ENCODE measurements at regions of chr16 and their contacts with region 1.

Region 1: DNA sequence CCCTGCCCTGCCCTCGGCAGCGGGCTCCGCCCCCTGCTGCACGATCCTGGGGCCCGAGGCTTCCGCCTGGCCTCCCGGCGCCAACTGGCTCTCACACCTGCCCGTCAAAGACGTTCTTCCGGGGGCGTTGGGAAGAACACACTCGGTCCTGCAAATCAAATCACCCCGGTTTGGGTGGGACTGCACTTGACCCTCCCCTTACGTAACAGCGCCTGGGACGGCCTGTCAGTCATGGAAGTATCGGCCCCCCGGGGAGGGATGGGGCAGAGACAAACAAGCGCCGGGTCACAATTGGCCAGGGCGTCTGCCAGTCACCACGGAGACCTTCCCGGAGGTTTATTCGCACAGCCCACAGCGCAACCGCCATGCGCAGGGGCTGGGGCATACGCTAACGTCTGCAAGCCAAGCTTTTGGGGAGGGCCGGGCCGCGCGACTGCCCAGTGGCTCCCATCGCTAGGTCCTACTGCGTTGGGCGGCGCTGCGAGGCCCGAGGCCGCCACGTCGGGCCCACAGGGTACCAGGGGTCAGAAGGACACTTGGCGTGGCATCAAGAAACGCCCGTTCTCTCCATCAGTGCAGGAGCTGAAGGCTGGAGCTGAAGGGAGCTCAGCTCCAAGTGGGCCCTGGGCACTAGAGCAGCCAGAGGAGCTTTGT is 388 bp upstream of the AKTIP start:
- DNase-seq: peak; percentile 100
- H3K4me3 ChIP-seq: peak overlapping the region; percentile 87 to 98 (median 94)
- H3K27ac ChIP-seq: peak overlapping the region; percentile 92 to 97 (median 96)
- H3K4me1 ChIP-seq: peaks cover 25 to 42% (median 35%) of the 10 kb centered on the region in 4 donors
- H3K27me3 ChIP-seq: no peaks in the 10 kb centered on the region
- CTCF ChIP-seq: peak in 1 of 3 experiments; percentile 8
- EP300 ChIP-seq: no peak
- POLR2A ChIP-seq: peak; percentile 44

Region 2: DNA sequence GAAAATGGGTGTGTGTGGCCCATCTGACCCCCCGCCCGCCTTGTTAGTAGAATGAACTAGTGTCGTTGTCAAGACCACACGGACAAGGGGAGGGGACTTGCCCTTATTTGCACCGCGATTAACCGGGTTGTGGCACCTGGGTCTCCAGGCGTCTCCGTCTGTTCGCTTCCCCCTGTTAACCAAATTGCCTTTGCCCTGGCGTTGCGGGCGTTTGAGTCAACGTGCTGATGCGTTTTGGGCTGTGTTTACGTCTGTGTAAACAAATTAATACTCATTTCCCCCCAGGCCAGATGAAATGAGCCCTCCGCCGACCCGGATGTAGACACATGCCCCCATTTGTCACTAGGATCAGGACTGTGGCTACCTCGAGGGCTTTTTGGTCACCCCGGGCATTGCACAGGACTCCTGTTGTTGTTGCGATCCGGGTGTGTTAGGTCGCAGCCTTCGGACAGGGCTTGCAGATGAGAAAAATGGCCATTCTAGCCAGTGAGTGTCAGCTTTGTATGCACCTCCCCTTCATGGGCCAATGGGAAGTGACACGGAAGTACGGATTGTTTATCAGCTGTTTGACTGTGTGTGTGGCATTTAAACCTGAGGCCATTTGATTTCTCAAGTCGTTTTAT is 68.2 kb before region 1 on chr16:
- intact Hi-C with region 1: loop called (anchors 2 kb)
- DNase-seq: peak; percentile 93
- H3K4me3 ChIP-seq: peak overlapping the region; percentile 97 to 100 (median 98)
- H3K27ac ChIP-seq: peak overlapping the region; percentile 94 to 99 (median 96)
- H3K4me1 ChIP-seq: peaks cover 17 to 25% (median 22%) of the 10 kb centered on the region in 4 donors
- H3K27me3 ChIP-seq: no peaks in the 10 kb centered on the region
- CTCF ChIP-seq: no peak
- EP300 ChIP-seq: no peak
- POLR2A ChIP-seq: no peak

Region 3: DNA sequence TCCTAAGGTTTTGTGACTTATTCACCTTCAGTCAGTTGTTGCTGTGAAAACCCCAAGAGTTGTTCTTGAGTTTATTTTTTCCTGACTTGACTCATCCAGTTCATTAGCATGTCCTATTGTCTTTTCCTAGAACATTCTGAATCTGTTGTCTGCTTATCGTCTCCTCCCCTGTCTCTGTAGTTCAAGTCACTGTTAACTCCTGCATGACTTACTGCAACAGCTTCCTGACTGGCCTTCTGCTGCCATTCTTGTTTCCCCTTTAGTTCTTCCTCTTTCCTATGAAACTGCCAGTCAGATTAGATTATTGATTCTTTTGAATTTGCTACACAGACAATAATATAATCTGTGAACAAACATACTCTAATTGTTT is 362.1 kb after region 1 on chr16:
- intact Hi-C with region 1: no loop called
- DNase-seq: no peak
- H3K4me3 ChIP-seq: no peak overlapping the region
- H3K27ac ChIP-seq: peak overlapping the region in 1 of 4 donors; percentile 29
- H3K4me1 ChIP-seq: peaks cover 0 to 16% (median 4%) of the 10 kb centered on the region in 4 donors
- H3K27me3 ChIP-seq: no peaks in the 10 kb centered on the region
- CTCF ChIP-seq: no peak
- EP300 ChIP-seq: no peak
- POLR2A ChIP-seq: no peak

Measured in esophagus muscularis mucosa (tissue), 4 donors.